Heart left ventricle (tissue), 16 donors: ENCODE measurements at regions of chr17 and their contacts with region 1.

Region 1: GRCh38 chr17:40349920-40350909 is 14.3 kb downstream of the GJD3 start:
- DNase-seq: peak in 3 of 5 donors; percentile 53 to 57 (median 55)
- ATAC-seq: peak in 1 of 4 donors; percentile 1
- H3K4me3 ChIP-seq: peak overlapping the region in 1 of 12 donors; percentile 25
- H3K27ac ChIP-seq: peak overlapping the region in 9 of 12 donors; percentile 17 to 99 (median 31)
- H3K4me1 ChIP-seq: peaks cover 31 to 80% (median 67%) of the 10 kb centered on the region in 12 donors
- H3K27me3 ChIP-seq: no peaks in the 10 kb centered on the region
- CTCF ChIP-seq: no peak
- POLR2A ChIP-seq: no peak

Region 2: DNA sequence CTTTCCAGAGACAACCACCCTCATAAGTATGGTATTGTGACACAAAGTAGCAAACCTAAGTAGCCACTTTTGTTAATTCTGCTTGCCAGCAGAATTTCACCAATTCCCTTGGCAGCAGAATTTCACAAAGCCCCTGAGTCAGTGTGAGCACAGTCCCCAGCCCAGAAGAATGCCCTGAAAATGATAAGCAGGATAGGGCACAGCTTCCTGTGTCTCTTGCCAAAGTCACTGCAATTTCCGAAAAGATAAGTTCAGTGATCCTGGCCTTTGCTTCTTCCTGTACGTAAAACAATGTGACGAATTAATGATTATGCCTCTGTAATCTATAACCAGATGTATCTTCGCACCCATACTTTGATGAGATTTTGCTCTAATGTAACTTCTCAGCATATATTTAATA is 147.1 kb before region 1 on chr17:
- intact Hi-C with region 1: loop called in 4 of 10 experiments (anchors 5 to 10 kb)
- DNase-seq: no peak
- ATAC-seq: peak in 2 of 4 donors; percentile 65
- H3K4me3 ChIP-seq: no peak overlapping the region
- H3K27ac ChIP-seq: no peak overlapping the region
- H3K4me1 ChIP-seq: peaks cover 0 to 16% (median 0%) of the 10 kb centered on the region in 12 donors
- H3K27me3 ChIP-seq: no peaks in the 10 kb centered on the region
- CTCF ChIP-seq: no peak
- POLR2A ChIP-seq: no peak

Region 3: GRCh38 chr17:40309031-40309948 is 40.9 kb before region 1 on chr17 and contains the start of gene RARA:
- intact Hi-C with region 1: loop called in 4 of 10 experiments (anchors 2 kb)
- DNase-seq: peak in 2 of 5 donors; percentile 48 to 69
- ATAC-seq: peak in 3 of 4 donors; percentile 23 to 47 (median 35)
- H3K4me3 ChIP-seq: peak within 1 kb of the TSS in 11 of 12 donors; percentile 25 to 66 (median 50)
- H3K27ac ChIP-seq: peak within 1 kb of the TSS in 10 of 12 donors; percentile 19 to 99 (median 70)
- H3K4me1 ChIP-seq: peaks cover 21 to 89% (median 79%) of the 10 kb centered on the region in 12 donors
- H3K27me3 ChIP-seq: no peaks in the 10 kb centered on the region
- CTCF ChIP-seq: no peak
- POLR2A ChIP-seq: no peak
- total RNA-seq, gene RARA: 14.1 to 41.4 (median 19.4) TPM